ENCODE measurements at regions of chr5 and their contacts with region 1.

Region 1: DNA sequence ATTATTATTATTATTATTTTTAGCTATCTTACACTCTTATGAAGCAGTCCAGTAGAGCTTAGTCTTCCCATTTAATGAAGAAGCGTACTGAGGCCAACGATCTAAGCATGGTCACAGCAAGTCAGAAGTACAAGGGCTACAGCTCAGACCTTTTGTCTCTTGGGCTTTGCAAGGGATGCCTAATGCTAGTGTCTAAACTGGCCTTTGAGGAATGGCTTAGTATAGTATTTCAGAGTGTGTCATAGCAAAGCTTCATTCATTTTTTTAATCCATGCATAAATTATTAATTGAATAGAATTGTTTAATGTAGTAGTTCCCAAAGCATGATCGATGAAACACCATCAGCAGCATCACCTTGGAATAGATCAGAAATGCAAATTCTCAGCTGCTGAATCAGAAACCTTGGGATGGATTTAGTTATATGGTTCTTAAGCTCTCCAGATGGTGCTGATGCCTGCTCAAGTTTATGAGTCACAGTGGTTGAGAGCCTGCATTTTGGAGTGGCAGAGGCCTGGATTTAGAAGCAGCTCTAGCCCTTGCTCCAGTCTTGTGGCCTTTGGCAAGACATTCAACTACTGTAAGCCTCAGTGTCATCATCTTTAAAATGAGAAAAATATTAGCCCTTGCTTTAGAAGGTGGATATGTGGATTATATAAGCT is 6.1 kb downstream of the IL12B start:
- DNase-seq: no peak
- ATAC-seq: no peak
- H3K4me3 ChIP-seq: no peak overlapping the region
- H3K27ac ChIP-seq: no peak overlapping the region
- H3K4me1 ChIP-seq: no peaks in the 10 kb centered on the region
- H3K27me3 ChIP-seq: 0 out of 4 replicates have a peak, but pooled peaks cover 0 to 3% of the 10 kb centered on the region in 2 experiments
- CTCF ChIP-seq: no peak
- EP300 ChIP-seq: no peak
- POLR2A ChIP-seq: no peak
- RAD21 ChIP-seq: no peak

Region 2: DNA sequence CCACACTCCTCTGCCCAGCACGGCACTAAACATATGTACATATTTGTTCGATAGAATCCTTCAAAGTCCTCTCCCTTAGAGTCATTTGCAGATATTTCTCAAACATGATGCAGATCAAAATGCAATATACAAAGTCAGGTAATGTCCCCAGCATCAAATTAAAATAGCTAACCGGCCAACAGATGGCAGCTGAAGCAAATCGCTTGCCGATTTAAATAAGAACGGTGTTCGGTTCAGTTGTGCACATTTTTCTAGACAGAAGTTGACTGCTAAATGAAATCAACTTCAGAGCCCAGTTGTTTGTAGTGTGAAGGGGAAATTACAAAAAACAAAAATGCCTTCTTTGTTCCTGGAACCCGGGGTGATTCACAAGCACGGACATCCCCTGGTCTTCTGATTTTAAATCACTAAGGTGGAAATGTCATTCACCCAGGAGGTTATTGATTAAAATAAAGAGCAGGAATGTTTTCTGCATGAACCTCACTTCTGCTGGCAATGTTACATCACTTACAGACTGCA is 443.7 kb before region 1 on chr5:
- CTCF ChIA-PET with region 1: no interaction called
- POLR2A ChIA-PET with region 1: no interaction called
- RAD21 ChIA-PET with region 1: no interaction called
- SMC1A ChIA-PET with region 1: no interaction called
- in situ Hi-C with region 1: no loop called
- intact Hi-C with region 1: no loop called
- DNase-seq: no peak
- ATAC-seq: peak; percentile 31
- H3K4me3 ChIP-seq: peak overlapping the region; percentile 24; the same call in 1 of the 2 replicates
- H3K27ac ChIP-seq: peak overlapping the region; percentile 83
- H3K4me1 ChIP-seq: peaks cover 66% of the 10 kb centered on the region
- H3K27me3 ChIP-seq: no peaks in the 10 kb centered on the region
- CTCF ChIP-seq: peak in 2 of 3 experiments; percentile 29 to 53; a peak in 3 of 6 replicates
- EP300 ChIP-seq: peak in 1 of 2 experiments; percentile 2; a peak in 1 of 4 replicates
- POLR2A ChIP-seq: no peak
- RAD21 ChIP-seq: peak; percentile 56

Region 3: DNA sequence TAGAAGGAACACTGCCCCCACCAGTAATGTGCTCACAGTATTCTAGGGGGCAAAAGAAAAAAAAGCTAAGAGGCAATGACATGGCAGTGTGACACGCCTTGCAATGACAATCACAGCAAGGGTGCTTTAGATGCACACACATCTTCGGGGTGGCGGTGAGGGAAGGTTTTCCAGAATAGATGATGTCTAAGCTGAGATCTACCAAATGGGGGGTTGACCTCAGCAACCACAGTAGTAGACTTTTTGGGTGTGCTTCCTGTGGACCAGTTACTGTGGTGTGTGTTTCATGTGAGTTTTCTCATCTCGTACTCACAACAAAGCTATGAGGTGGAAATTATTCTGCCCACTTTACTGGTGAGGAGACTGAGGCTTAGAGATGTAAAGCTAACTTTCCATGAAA is 16.3 kb after region 1 on chr5:
- CTCF ChIA-PET with region 1: no interaction called
- POLR2A ChIA-PET with region 1: no interaction called
- RAD21 ChIA-PET with region 1: no interaction called
- SMC1A ChIA-PET with region 1: no interaction called
- in situ Hi-C with region 1: no loop called
- intact Hi-C with region 1: no loop called
- DNase-seq: no peak
- ATAC-seq: no peak
- H3K4me3 ChIP-seq: no peak overlapping the region
- H3K27ac ChIP-seq: no peak overlapping the region
- H3K4me1 ChIP-seq: no peaks in the 10 kb centered on the region
- H3K27me3 ChIP-seq: no peaks in the 10 kb centered on the region
- CTCF ChIP-seq: no peak
- EP300 ChIP-seq: no peak
- POLR2A ChIP-seq: no peak
- RAD21 ChIP-seq: no peak

Region 4: DNA sequence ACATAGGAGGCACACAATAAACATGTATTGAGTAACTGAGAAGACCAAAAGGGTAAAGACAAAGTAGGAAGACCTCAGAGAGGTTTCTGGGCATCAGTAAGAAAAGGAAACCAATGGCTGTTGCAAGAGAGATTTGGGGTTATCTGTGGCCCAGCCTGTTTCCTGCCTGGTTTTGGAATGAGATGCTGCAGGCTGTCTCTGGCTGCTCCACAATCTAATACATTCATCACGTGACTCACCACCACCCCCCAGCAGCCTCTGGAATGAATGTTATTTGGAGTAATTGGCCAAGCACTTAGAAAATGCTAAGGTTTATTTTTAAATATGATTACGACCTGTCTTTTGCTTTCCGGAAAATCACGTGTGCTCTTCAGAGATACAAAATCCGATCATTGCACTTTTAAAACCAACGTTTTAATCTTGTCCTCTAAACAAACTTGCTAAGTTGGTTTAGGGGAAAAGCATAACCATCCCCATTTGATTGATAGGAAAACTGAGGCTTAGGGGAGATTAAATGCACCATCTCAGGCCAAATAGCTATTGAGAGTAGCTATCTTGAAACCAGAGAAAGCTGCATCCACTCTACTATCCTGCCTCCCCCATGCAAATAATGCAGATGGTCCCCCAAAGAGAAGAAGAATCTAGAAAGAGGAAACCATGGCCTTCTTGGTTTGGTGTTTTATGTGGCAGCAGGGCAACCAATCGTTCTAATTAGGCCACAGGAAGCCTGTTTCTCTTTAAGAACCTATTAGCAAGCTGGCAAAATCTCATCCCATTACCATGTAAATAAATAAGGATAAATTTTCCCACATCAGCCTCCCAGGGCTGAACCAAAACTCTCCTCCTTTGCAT is 440.3 kb after region 1 on chr5:
- CTCF ChIA-PET with region 1: no interaction called
- POLR2A ChIA-PET with region 1: no interaction called
- RAD21 ChIA-PET with region 1: no interaction called
- SMC1A ChIA-PET with region 1: no interaction called
- in situ Hi-C with region 1: no loop called
- intact Hi-C with region 1: loop called (anchors 10 kb)
- DNase-seq: no peak
- ATAC-seq: no peak
- H3K4me3 ChIP-seq: no peak overlapping the region
- H3K27ac ChIP-seq: no peak overlapping the region
- H3K4me1 ChIP-seq: no peaks in the 10 kb centered on the region
- H3K27me3 ChIP-seq: peaks cover 0 to 4% of the 10 kb centered on the region in 2 experiments; a peak in 3 of 4 replicates
- CTCF ChIP-seq: no peak
- EP300 ChIP-seq: no peak
- POLR2A ChIP-seq: no peak
- RAD21 ChIP-seq: no peak